ENCODE measurements at regions of chr12 and their contacts with region 1.

Region 1: GRCh38 chr12:132600048-132601032 is 10.0 kb downstream of the LRCOL1 start:
- DNase-seq: peak; percentile 23
- ATAC-seq: peak; percentile 88
- H3K4me3 ChIP-seq: peak overlapping the region in 1 of 2 experiments; percentile 14; a peak in 1 of 4 replicates
- H3K27ac ChIP-seq: no peak overlapping the region
- H3K4me1 ChIP-seq: peaks cover 5 to 25% of the 10 kb centered on the region in 2 experiments
- H3K27me3 ChIP-seq: no peaks in the 10 kb centered on the region
- CTCF ChIP-seq: peak; percentile 65 to 84 (median 68)
- POLR2A ChIP-seq: no peak
- RAD21 ChIP-seq: no peak; the same call in 1 of the 2 replicates

Region 2: GRCh38 chr12:132638541-132639418 is 38.4 kb after region 1 on chr12:
- CTCF ChIA-PET with region 1: no interaction called
- POLR2A ChIA-PET with region 1: no interaction called
- RAD21 ChIA-PET with region 1: no interaction called
- intact Hi-C with region 1: loop called (anchors 1 kb)
- DNase-seq: no peak
- ATAC-seq: peak; percentile 75
- H3K4me3 ChIP-seq: no peak overlapping the region
- H3K27ac ChIP-seq: no peak overlapping the region; the same call in 1 of the 2 replicates
- H3K4me1 ChIP-seq: no peaks in the 10 kb centered on the region
- H3K27me3 ChIP-seq: no peaks in the 10 kb centered on the region
- CTCF ChIP-seq: peak; percentile 45 to 79 (median 77); a peak in 5 of 6 replicates
- POLR2A ChIP-seq: no peak
- RAD21 ChIP-seq: peak; percentile 44; the same call in 1 of the 2 replicates